Common myeloid progenitor, CD34-positive (primary cell): ENCODE measurements at regions of chr11 and their contacts with region 1.

Region 1: GRCh38 chr11:73141848-73142286 is 251 bp downstream of the FCHSD2 start:
- DNase-seq: peak; percentile 83 to 91 (median 84)
- H3K4me3 ChIP-seq: peak overlapping the region; percentile 86 to 98 (median 93)
- H3K27ac ChIP-seq: peak overlapping the region; percentile 90 to 95
- H3K4me1 ChIP-seq: peaks cover 44 to 78% (median 67%) of the 10 kb centered on the region in 4 experiments
- H3K27me3 ChIP-seq: no peaks in the 10 kb centered on the region

Region 2: GRCh38 chr11:73085189-73085875 is 56.5 kb before region 1 on chr11:
- CTCF ChIA-PET with region 1: no interaction called
- POLR2A ChIA-PET with region 1: no interaction called
- DNase-seq: peak; percentile 11 to 46 (median 35)
- H3K4me3 ChIP-seq: peak overlapping the region in 1 of 7 experiments; percentile 40
- H3K27ac ChIP-seq: no peak overlapping the region
- H3K4me1 ChIP-seq: peaks cover 0 to 13% (median 4%) of the 10 kb centered on the region in 4 experiments
- H3K27me3 ChIP-seq: no peaks in the 10 kb centered on the region

Region 3: DNA sequence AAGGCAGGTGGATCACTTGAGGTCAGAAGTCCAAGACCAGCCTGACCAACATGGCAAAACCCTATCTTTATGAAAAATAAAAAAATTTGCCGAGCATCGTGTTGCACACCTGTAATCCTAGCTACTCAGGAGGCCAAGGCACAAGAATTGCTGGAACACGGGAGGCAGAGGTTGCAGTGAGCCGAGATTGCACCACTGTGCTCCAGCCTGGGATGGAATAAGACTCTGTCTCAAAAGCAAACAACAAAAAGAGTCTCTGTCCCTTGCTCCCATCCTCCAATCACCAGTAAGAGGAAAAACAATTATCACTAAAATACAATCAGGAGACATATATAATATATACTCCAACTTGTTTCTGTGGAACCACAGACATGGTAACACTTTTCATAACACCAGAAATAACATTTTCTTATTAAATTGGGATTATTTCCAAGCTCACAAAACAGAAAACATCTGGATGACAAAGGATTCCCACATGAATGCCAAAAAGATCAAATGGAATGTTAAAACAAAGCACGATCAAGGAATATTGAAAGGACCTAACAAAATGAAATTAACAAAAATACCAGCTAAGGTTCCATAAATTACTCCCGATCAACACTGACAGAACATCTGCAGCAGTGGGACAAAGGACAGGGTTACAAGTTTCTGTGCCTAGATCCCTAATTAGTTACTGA is 14.9 kb before region 1 on chr11:
- CTCF ChIA-PET with region 1: interaction called, 24 read pairs
- POLR2A ChIA-PET with region 1: no interaction called
- DNase-seq: no peak
- H3K4me3 ChIP-seq: peak overlapping the region in 1 of 7 experiments; percentile 2
- H3K27ac ChIP-seq: no peak overlapping the region
- H3K4me1 ChIP-seq: no peaks in the 10 kb centered on the region
- H3K27me3 ChIP-seq: no peaks in the 10 kb centered on the region

Region 4: GRCh38 chr11:73157053-73158010 is 15.5 kb after region 1 on chr11:
- CTCF ChIA-PET with region 1: interaction called, 36 read pairs
- POLR2A ChIA-PET with region 1: interaction called, 55 read pairs
- DNase-seq: peak in 2 of 3 donors; percentile 48 to 58
- H3K4me3 ChIP-seq: no peak overlapping the region
- H3K27ac ChIP-seq: no peak overlapping the region
- H3K4me1 ChIP-seq: peaks cover 20 to 73% (median 69%) of the 10 kb centered on the region in 4 experiments
- H3K27me3 ChIP-seq: no peaks in the 10 kb centered on the region

Region 5: GRCh38 chr11:73164803-73165540 is 23.1 kb after region 1 on chr11:
- CTCF ChIA-PET with region 1: interaction called, 36 read pairs
- POLR2A ChIA-PET with region 1: interaction called, 3 read pairs
- DNase-seq: peak in 2 of 3 donors; percentile 50 to 63
- H3K4me3 ChIP-seq: no peak overlapping the region
- H3K27ac ChIP-seq: no peak overlapping the region
- H3K4me1 ChIP-seq: peaks cover 5 to 44% (median 17%) of the 10 kb centered on the region in 4 experiments
- H3K27me3 ChIP-seq: no peaks in the 10 kb centered on the region